ENCODE measurements at regions of chr3 and their contacts with region 1.

Region 1: GRCh38 chr3:123328851-123329635 is 119.8 kb downstream of the ADCY5 start:
- DNase-seq: peak; percentile 66 to 97 (median 88)

Region 2: DNA sequence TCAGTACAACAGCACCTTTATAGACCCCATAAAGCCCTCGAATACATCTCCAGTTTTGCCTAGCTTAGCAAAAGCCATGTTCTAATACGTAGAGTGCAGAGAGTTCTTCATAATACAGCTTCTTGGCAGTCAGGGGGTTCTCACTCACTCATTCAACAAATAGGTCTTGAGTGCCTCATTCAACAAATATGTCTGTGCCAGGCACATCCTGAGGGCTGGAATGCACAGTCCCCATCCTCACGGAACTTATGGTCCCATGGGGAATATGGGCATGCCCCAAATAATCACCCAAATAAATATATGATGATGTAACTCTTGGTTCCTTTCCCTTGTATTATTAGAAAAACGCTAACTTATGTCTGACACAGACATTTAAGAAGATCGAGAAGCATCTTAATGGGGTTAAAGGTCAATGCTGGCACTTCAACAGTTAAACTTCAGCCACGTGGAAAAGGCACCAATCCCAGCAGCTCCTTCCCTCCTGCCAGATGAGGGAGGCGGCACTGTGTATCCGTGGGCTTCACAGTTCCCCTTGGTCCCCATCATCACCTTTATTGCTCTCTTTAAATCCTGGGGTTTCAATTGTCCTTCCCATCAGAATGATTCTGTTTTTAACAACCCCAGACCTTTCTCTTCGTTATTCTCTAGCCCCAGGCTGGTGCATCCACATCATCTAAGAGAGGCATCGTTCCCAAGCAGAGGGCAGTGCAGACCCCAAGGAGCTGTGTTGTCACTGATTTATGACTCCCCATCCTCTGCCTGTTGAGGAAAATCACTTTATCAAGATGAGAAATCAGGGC is 282.6 kb before region 1 on chr3:
- intact Hi-C with region 1: no loop called
- DNase-seq: no peak

Region 3: DNA sequence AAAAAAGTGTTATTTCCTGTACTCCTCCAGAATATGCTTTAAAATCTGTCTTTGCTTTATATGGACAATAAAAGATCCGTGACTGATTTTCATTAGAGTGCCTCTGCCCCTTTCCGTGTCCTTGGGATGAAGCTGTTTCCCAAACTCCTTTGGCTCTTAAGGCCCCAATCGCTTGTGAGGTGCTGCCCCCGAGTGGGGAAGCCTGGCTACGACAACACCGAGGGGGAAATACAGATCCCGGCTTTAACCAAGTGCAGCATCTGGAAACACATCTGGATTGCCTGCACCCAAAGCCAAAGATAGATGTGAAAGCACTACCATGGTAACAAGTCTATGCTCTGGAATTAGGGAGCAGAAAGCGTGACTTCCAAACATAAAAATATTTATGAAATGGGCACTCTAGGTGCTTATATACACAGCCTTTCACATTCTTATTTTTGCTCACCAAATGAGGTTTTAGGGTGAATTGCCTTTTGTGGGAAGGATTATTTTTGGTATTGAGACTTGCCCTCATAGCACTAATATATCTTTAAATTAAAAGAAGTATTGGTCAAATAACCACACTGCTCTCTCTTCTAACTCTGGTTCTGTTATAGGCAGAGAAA is 160.5 kb after region 1 on chr3:
- intact Hi-C with region 1: loop called (anchors 1 kb)
- DNase-seq: peak; percentile 59 to 97 (median 82)

Region 4: GRCh38 chr3:123559040-123559861 is 230.2 kb after region 1 on chr3:
- intact Hi-C with region 1: loop called (anchors 1 kb)
- DNase-seq: no peak

Measured in posterior cingulate gyrus (tissue), 11 donors.